Activated CD8-positive, alpha-beta T cell treated with anti-CD3 and anti-CD28 coated beads for 36 hours (primary cell): ENCODE measurements at regions of chr20 and their contacts with region 1.

Region 1: GRCh38 chr20:8722276-8722928 is 346.5 kb upstream of the PLCB4 start:
- DNase-seq: peak; percentile 32
- ATAC-seq: peak; percentile 51
- H3K4me3 Mint-ChIP-seq: no peak overlapping the region
- H3K27ac Mint-ChIP-seq: no peak overlapping the region
- H3K4me1 Mint-ChIP-seq: no peaks in the 10 kb centered on the region
- H3K27me3 Mint-ChIP-seq: no peaks in the 10 kb centered on the region
- CTCF ChIP-seq: peak; percentile 56

Region 2: GRCh38 chr20:8019246-8019997 is 703.0 kb before region 1 on chr20 and contains the start of gene TMX4:
- CTCF ChIA-PET with region 1: interaction called, 16 read pairs
- POLR2A ChIA-PET with region 1: no interaction called
- intact Hi-C with region 1: no loop called
- DNase-seq: peak; percentile 96
- ATAC-seq: peak; percentile 88
- H3K4me3 Mint-ChIP-seq: no peak within 1 kb of the TSS
- H3K27ac Mint-ChIP-seq: peak within 1 kb of the TSS; percentile 82
- H3K4me1 Mint-ChIP-seq: peaks cover 29% of the 10 kb centered on the region
- H3K27me3 Mint-ChIP-seq: no peaks in the 10 kb centered on the region
- CTCF ChIP-seq: peak; percentile 15
- total RNA-seq, gene TMX4: 21.2 to 21.8 TPM

Region 3: GRCh38 chr20:8049310-8049709 is 673.1 kb before region 1 on chr20:
- CTCF ChIA-PET with region 1: interaction called, 112 read pairs
- POLR2A ChIA-PET with region 1: interaction called, 5 read pairs
- intact Hi-C with region 1: loop called (anchors 5 kb)
- DNase-seq: no peak
- ATAC-seq: no peak
- H3K4me3 Mint-ChIP-seq: no peak overlapping the region
- H3K27ac Mint-ChIP-seq: no peak overlapping the region
- H3K4me1 Mint-ChIP-seq: peaks cover 6% of the 10 kb centered on the region
- H3K27me3 Mint-ChIP-seq: peaks cover 2% of the 10 kb centered on the region
- CTCF ChIP-seq: no peak

Region 4: DNA sequence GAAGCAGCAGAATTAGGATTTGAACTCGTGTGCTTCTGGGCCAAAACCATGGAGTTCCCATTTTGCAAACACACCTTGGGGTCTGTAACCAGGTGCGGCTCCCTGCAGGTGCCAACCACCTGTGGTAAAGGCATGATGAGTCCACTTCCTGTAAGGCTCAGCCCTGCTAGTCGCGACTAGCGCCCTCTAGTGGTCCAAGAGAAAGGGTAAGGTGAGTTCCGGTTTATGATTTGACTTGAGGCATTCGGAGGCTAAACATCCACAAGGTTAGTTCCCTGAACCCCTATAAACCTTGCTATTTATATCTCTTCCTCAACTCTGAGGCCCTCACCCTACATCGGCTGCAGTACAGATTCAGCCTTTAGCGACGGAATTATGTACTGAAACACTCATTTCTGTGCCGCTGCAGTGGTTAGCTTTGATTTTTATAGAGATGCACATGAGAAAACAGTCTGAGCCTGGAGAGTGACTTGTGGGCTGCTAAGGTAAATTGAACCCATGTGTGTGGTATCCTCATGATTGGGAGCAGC is 416.9 kb before region 1 on chr20:
- CTCF ChIA-PET with region 1: interaction called, 17 read pairs
- POLR2A ChIA-PET with region 1: no interaction called
- intact Hi-C with region 1: no loop called
- DNase-seq: peak; percentile 83
- ATAC-seq: peak; percentile 83
- H3K4me3 Mint-ChIP-seq: no peak overlapping the region
- H3K27ac Mint-ChIP-seq: no peak overlapping the region
- H3K4me1 Mint-ChIP-seq: no peaks in the 10 kb centered on the region
- H3K27me3 Mint-ChIP-seq: peaks cover 2% of the 10 kb centered on the region
- CTCF ChIP-seq: peak; percentile 71

Region 5: GRCh38 chr20:8535403-8536261 is 186.8 kb before region 1 on chr20:
- CTCF ChIA-PET with region 1: interaction called, 13 read pairs
- POLR2A ChIA-PET with region 1: no interaction called
- intact Hi-C with region 1: no loop called
- DNase-seq: peak; percentile 24
- ATAC-seq: no peak
- H3K4me3 Mint-ChIP-seq: no peak overlapping the region
- H3K27ac Mint-ChIP-seq: no peak overlapping the region
- H3K4me1 Mint-ChIP-seq: no peaks in the 10 kb centered on the region
- H3K27me3 Mint-ChIP-seq: no peaks in the 10 kb centered on the region
- CTCF ChIP-seq: peak; percentile 41

Region 6: DNA sequence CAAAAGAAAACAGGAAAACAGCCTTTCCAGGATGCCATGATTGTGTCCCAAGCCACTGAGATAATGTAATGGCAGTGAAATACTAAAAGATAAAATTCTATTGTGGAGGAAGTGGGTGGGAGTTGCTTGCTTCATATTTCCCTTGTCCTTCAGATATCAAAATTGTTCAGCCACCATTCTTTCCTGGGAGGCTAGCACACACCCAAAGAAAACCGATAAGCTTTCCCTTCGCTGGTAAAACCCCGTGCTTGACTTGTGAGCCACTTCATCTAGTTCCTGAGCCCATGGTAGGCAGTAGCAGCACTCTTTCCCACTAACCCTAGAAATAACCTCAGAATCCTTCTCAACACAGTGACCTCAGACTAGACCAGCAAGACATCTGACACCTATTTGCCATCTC is 10.9 kb before region 1 on chr20:
- CTCF ChIA-PET with region 1: interaction called, 33 read pairs
- POLR2A ChIA-PET with region 1: interaction called, 3 read pairs
- intact Hi-C with region 1: no loop called
- DNase-seq: no peak
- ATAC-seq: no peak
- H3K4me3 Mint-ChIP-seq: no peak overlapping the region
- H3K27ac Mint-ChIP-seq: no peak overlapping the region
- H3K4me1 Mint-ChIP-seq: no peaks in the 10 kb centered on the region
- H3K27me3 Mint-ChIP-seq: no peaks in the 10 kb centered on the region
- CTCF ChIP-seq: no peak